ENCODE measurements at regions of chr1 and their contacts with region 1.

Region 1: GRCh38 chr1:89780721-89781120 is 40.1 kb upstream of the LRRC8D start:
- DNase-seq: peak; percentile 15 to 78
- H3K4me3 ChIP-seq: no peak overlapping the region
- H3K27ac ChIP-seq: no peak overlapping the region
- H3K4me1 ChIP-seq: no peaks in the 10 kb centered on the region
- H3K27me3 ChIP-seq: no peaks in the 10 kb centered on the region
- CTCF ChIP-seq: peak; percentile 80

Region 2: GRCh38 chr1:89808448-89809117 is 27.9 kb after region 1 on chr1:
- CTCF ChIA-PET with region 1: no interaction called
- POLR2A ChIA-PET with region 1: no interaction called
- intact Hi-C with region 1: no loop called
- DNase-seq: peak; percentile 87 to 99
- H3K4me3 ChIP-seq: peak overlapping the region; percentile 13; the same call in 1 of the 2 replicates
- H3K27ac ChIP-seq: peak overlapping the region; percentile 88
- H3K4me1 ChIP-seq: peaks cover 57% of the 10 kb centered on the region
- H3K27me3 ChIP-seq: no peaks in the 10 kb centered on the region
- CTCF ChIP-seq: no peak

Region 3: DNA sequence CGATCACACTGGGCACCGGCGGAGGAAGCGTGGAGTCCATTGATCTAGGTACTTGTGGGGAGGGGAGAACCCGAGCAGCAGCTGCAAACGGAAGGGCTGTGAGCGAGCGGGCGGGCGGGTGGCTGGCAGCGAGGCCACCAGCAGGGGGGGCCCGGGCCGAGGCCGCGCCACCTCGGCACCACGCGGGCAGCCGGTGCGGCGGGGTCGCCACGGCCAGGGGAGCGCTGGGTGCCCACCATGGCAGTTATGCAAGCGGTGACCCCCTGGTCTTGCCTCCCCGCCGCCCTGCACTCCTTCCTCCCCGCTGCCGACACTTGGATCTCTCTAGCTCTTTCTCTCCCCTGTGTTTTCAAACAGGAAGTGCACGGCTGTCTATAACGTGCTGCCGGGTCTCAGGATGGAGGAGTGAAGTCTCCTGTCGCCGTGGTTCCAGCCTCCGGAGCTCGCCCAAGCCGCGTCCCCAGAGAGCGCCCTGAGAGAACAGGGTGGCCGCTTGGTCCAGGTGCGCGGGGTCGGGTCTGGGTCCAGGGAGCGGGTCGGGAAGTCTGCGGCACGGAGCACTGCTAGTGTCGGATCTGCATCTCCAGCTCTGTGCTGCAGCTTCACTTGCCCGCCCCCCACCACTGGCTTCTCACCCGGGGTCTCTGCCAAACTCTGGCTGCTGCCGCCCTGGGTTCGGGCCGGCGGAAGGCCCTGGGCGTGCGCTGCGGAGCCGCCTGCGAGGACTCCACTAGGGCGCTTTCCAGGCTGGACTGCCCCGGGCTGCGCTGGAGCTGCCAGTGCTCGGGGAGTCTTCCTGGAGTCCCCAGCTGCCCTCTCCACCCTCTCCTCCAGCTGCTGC is 62.8 kb after region 1 on chr1:
- CTCF ChIA-PET with region 1: no interaction called
- POLR2A ChIA-PET with region 1: no interaction called
- intact Hi-C with region 1: loop called (anchors 2 kb)
- DNase-seq: peak; percentile 45 to 67
- H3K4me3 ChIP-seq: peak overlapping the region; percentile 78
- H3K27ac ChIP-seq: peak overlapping the region; percentile 60
- H3K4me1 ChIP-seq: peaks cover 45% of the 10 kb centered on the region
- H3K27me3 ChIP-seq: no peaks in the 10 kb centered on the region
- CTCF ChIP-seq: peak; percentile 68

Region 4: GRCh38 chr1:90114521-90115141 is 333.9 kb after region 1 on chr1:
- CTCF ChIA-PET with region 1: no interaction called
- POLR2A ChIA-PET with region 1: no interaction called
- intact Hi-C with region 1: loop called (anchors 5 kb)
- DNase-seq: peak in 1 of 2 experiments; percentile 54
- H3K4me3 ChIP-seq: no peak overlapping the region
- H3K27ac ChIP-seq: no peak overlapping the region
- H3K4me1 ChIP-seq: no peaks in the 10 kb centered on the region
- H3K27me3 ChIP-seq: no peaks in the 10 kb centered on the region
- CTCF ChIP-seq: peak; percentile 95

Measured in PC-9 (cell line).